ENCODE measurements at regions of chr5 and their contacts with region 1.

Region 1: DNA sequence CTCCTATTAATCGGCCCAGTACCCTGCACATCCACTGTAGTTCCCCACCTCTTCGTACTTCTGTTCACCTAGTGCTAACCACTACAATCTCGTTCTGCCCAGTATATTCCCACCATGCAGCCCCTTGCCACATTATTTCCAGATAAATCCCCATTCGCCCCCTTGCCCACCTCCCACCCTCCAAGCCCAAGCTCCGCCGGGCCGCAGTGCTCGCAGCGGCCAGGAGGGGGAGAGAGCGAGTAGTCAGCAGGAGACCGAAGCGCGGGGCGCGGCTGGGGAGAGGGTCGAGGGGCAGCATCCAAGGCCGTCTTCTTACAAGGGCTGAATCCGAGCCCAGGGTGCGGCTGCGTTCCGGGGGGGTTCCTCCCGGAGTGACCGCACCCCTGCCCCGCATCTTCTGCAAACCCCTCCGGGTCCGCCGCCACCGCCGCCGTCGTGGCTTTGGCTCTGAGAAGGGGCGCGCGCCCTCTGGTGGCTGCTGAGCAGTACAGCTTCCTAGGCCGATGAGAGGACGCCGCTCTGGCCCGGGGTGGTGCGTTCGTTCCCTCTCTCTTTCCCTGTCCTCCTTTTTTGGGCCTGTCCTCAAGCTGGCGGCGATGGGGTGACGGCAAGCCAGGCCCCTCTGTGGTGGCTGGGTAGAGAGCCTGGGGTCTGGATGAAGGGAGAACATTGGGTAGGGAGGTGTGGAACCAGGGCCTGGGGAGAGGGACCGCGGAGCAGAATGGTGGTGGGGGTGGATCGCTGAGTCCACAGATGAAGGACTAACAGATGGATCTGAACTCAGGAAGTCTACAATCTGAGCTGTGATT is 30.0 kb upstream of the PSD2 start:
- DNase-seq: peak; percentile 68
- H3K4me3 Mint-ChIP-seq: peak overlapping the region; percentile 75
- H3K27ac Mint-ChIP-seq: peak overlapping the region; percentile 47
- H3K4me1 Mint-ChIP-seq: peaks cover 14% of the 10 kb centered on the region
- H3K27me3 Mint-ChIP-seq: peaks cover 46% of the 10 kb centered on the region

Region 2: DNA sequence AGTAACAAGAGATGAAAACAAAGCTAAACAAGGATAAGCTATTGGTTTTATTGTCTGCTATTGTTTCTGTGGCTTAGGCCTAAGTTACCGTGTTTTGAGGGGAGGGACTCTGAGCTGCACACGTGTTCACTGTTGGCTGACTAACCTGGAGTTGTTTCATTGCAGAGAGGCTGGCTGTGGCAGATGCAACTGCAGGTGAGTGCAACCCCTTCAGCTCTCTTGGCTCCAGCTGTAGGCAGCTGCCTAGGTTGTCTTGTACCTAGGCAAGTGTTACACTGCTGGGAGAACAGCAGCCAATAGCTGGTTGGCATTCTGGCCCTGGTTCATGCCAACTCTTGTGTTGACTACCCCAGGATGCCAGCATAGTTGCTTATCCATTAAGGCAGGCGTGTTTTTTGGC is 489.7 kb before region 1 on chr5:
- intact Hi-C with region 1: no loop called
- DNase-seq: no peak
- H3K4me3 Mint-ChIP-seq: peak overlapping the region; percentile 96
- H3K27ac Mint-ChIP-seq: no peak overlapping the region
- H3K4me1 Mint-ChIP-seq: peaks cover 58% of the 10 kb centered on the region
- H3K27me3 Mint-ChIP-seq: peaks cover 4% of the 10 kb centered on the region

Region 3: DNA sequence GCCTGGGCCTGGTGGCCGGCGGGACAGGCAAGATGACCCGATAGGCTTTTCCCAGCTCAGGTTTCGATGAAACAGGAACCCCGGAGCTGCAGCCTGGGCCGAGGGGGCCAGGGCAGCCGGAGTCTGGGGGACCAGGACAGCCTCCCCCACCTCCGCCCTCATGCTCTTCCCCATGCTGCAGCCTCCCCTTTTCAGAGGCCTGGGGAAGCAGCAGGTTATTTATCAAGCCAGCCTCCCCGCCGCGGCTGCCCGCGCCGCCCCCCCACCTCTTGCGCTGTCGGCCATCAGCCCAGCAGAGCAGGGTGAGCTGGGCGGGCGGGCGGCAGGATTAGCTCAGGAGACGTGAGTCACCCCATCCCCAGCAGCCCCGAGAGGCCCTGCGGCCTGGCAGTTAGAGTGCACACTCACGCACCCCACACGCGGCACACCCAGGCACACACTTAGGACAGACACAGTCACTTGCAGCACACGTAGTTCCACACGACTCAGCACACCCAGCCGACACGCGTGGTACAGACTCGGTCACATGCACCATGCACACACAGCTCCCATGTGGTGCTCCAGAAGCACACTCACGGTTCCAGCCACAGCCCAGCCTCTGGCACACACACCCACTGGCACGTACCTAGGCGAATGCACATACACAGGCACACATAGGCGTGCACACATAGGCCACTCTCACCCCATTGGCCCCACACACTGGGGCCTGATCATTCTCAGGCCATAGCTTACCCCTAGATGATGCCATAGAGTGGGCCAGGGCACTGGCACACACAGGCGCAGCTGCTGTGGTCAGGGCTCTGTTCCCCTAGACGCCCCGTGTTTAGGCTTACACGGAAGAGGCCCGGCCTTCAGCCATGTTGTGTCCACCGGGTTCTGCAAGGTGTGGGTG is 104.4 kb before region 1 on chr5:
- intact Hi-C with region 1: no loop called
- DNase-seq: no peak
- H3K4me3 Mint-ChIP-seq: no peak overlapping the region
- H3K27ac Mint-ChIP-seq: no peak overlapping the region
- H3K4me1 Mint-ChIP-seq: peaks cover 12% of the 10 kb centered on the region
- H3K27me3 Mint-ChIP-seq: peaks cover 4% of the 10 kb centered on the region

Region 4: DNA sequence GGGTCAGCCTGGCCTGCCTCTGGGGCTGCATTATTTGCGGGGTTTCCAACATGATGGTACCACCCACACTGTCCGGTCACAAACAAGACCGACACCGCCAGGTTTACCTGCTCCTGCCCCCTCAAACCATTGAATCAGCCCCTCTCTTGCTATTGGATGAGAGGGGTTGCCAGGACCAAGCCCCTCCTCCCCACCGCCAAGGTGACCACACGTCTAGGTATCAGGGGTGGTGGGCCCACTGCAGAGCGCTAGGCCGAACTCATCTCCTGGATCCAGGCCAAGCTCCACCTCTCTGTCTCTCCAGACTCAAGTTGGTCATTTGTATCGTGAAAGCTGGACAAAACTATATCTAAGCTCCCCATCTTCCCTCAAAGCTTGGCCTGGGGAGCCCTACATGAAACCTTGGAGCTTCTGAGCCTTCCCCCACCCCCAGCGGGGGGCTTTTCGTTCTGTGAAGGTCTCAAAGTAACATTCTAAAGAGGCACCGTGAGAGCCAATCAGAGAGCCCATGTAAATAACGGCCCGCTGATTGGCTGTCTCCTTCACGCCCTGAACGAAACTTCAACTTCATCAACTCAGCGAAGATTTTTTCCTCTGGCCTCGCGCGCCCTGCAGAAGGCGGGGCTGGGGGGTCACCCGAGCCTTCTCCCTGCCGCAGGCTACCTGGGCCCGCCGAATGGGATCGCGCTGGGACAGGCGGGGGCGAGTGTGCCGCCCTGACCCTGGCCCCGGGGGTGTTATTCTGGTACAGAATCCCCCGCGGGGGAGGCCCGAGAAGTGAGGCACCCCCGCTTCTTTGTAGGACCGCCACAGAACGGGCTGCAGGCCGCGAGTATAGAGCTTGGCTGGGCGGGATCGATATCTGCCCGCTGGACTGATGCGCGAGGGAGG is 19.6 kb before region 1 on chr5:
- intact Hi-C with region 1: loop called (anchors 1 kb)
- DNase-seq: peak; percentile 19
- H3K4me3 Mint-ChIP-seq: peak overlapping the region; percentile 85
- H3K27ac Mint-ChIP-seq: peak overlapping the region; percentile 26
- H3K4me1 Mint-ChIP-seq: peaks cover 24% of the 10 kb centered on the region
- H3K27me3 Mint-ChIP-seq: peaks cover 45% of the 10 kb centered on the region